Activated CD8-positive, alpha-beta T cell treated with anti-CD3 and anti-CD28 coated beads for 36 hours (primary cell): ENCODE measurements at regions of chr4 and their contacts with region 1.

Region 1: GRCh38 chr4:140359562-140360427 is 13.7 kb upstream of the SCOC start:
- DNase-seq: peak; percentile 88
- ATAC-seq: peak; percentile 93
- H3K4me3 Mint-ChIP-seq: no peak overlapping the region
- H3K27ac Mint-ChIP-seq: no peak overlapping the region
- H3K4me1 Mint-ChIP-seq: no peaks in the 10 kb centered on the region
- H3K27me3 Mint-ChIP-seq: peaks cover 2% of the 10 kb centered on the region
- CTCF ChIP-seq: peak; percentile 89

Region 2: DNA sequence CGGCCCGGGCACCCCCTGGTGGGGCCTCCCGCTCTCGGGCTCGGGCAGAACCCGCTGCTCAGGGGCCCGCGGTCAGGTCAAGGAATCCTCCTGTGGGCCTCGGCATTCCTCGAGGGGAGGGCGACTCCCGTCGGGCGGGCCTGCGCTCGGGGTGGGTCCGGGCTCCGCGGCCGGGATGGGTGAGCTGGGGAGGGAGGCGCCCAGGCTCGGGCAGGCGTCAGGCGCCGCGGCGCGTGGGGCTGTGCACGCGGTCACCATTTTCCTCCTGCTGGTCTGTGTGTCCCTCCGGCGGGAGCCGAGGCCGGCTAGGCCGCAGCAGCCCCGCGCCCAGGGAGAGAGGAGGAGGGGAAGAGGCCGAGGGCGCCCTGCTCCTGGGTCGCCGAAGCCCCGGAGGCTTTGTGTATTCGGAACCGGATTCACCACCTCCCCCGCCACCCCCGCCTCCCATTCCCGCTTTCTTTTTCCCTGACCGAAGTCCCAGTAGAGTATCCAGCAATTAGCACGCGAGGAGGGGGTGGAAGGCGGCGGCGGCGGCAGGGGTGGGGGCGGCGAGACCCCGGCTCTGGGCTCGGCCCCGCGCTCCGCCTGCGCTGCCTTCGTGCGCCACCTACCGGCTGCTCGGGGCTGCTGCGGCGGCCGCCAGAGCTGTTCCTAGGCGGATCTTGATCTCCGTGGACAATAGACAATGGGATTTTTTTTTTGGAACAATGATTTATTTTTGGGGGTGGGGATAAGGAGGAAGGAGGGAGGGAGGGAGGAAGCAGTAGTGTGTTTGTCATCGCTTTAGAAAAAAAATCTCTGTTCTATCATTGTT is 106.8 kb before region 1 on chr4:
- CTCF ChIA-PET with region 1: interaction called, 15 read pairs
- POLR2A ChIA-PET with region 1: no interaction called
- intact Hi-C with region 1: no loop called
- DNase-seq: peak; percentile 62
- ATAC-seq: peak; percentile 69
- H3K4me3 Mint-ChIP-seq: peak overlapping the region; percentile 29
- H3K27ac Mint-ChIP-seq: no peak overlapping the region
- H3K4me1 Mint-ChIP-seq: peaks cover 25% of the 10 kb centered on the region
- H3K27me3 Mint-ChIP-seq: peaks cover 11% of the 10 kb centered on the region
- CTCF ChIP-seq: peak; percentile 97

Region 3: DNA sequence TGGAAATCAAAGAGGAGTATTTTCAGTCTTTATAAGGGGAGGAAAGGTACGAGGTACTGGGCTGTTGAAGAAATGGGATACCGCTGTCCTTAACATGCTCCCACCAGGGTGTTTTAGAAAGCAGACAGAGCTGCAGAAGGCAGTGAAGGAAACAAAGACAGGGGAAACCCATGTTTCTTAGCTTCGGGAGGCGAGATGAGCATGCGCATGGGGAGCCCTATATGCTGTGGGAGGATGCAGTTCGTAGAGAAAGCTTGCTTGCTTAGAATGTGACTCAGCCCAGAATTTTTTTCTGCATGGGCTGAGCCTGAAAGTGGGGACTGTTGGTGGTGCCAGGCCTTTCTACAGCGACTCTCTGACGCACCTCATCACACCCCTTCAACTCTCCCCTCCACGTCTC is 15.2 kb before region 1 on chr4:
- CTCF ChIA-PET with region 1: interaction called, 35 read pairs
- POLR2A ChIA-PET with region 1: no interaction called
- intact Hi-C with region 1: no loop called
- DNase-seq: no peak
- ATAC-seq: no peak
- H3K4me3 Mint-ChIP-seq: no peak overlapping the region
- H3K27ac Mint-ChIP-seq: no peak overlapping the region
- H3K4me1 Mint-ChIP-seq: peaks cover 4% of the 10 kb centered on the region
- H3K27me3 Mint-ChIP-seq: peaks cover 14% of the 10 kb centered on the region
- CTCF ChIP-seq: no peak

Region 4: GRCh38 chr4:140382732-140383131 is 22.9 kb after region 1 on chr4:
- CTCF ChIA-PET with region 1: interaction called, 64 read pairs
- POLR2A ChIA-PET with region 1: no interaction called
- intact Hi-C with region 1: no loop called
- DNase-seq: no peak
- ATAC-seq: no peak
- H3K4me3 Mint-ChIP-seq: no peak overlapping the region
- H3K27ac Mint-ChIP-seq: no peak overlapping the region
- H3K4me1 Mint-ChIP-seq: peaks cover 2% of the 10 kb centered on the region
- H3K27me3 Mint-ChIP-seq: no peaks in the 10 kb centered on the region
- CTCF ChIP-seq: no peak

Region 5: GRCh38 chr4:140427106-140427961 is 67.5 kb after region 1 on chr4 and contains the start of gene CLGN:
- CTCF ChIA-PET with region 1: interaction called, 13 read pairs
- POLR2A ChIA-PET with region 1: interaction called, 3 read pairs
- intact Hi-C with region 1: no loop called
- DNase-seq: peak; percentile 68
- ATAC-seq: peak; percentile 91
- H3K4me3 Mint-ChIP-seq: peak within 1 kb of the TSS; percentile 73
- H3K27ac Mint-ChIP-seq: no peak within 1 kb of the TSS
- H3K4me1 Mint-ChIP-seq: peaks cover 5% of the 10 kb centered on the region
- H3K27me3 Mint-ChIP-seq: peaks cover 38% of the 10 kb centered on the region
- CTCF ChIP-seq: peak; percentile 54
- total RNA-seq, gene CLGN: 0.23 to 0.31 TPM

Region 6: DNA sequence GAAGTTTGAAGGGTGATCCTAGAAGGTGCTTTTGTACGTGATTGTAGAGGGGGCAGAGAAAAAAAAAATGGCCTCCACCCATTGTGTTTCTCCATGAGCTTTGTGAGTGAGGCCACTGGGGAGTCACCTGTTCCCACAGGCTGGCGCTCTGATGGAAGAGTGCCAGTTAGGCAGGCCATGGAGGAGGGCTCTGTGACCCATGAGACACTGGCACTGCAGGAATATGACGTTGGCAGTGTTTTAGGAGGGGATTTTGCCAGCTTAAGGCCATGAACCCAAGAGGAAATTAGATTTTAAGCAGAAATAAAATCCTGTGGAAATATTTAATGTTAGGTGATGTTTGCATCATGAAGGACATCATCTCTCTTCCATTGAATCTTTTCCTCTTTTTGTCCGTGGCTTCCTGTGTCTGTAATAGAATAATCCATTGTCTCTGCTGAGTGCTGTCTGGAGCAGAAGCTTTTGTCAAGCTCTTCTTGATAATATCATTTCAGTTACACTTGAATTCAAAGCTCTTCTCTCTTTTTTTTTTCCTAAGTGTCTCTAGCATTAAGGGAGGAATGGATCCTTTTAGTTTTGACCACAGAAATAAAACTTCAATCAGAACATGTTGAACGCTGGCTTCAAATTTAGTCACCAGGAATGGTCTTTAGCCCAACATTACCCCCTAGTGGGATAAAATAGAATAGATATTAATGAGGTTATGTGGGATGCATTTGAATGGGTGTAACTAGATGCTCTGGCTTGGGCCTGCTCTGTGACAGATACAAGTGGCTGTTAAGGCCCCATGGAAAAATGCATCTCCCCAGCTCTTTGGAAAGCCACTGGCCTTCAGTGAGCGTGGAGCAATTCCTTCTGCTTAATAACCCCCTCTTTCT is 250.0 kb after region 1 on chr4:
- CTCF ChIA-PET with region 1: interaction called, 29 read pairs
- POLR2A ChIA-PET with region 1: no interaction called
- intact Hi-C with region 1: loop called (anchors 5 kb)
- DNase-seq: no peak
- ATAC-seq: peak; percentile 73
- H3K4me3 Mint-ChIP-seq: no peak overlapping the region
- H3K27ac Mint-ChIP-seq: no peak overlapping the region
- H3K4me1 Mint-ChIP-seq: peaks cover 3% of the 10 kb centered on the region
- H3K27me3 Mint-ChIP-seq: peaks cover 6% of the 10 kb centered on the region
- CTCF ChIP-seq: peak; percentile 59

Region 7: GRCh38 chr4:140637836-140638235 is 278.0 kb after region 1 on chr4:
- CTCF ChIA-PET with region 1: interaction called, 16 read pairs
- POLR2A ChIA-PET with region 1: no interaction called
- intact Hi-C with region 1: no loop called
- DNase-seq: peak; percentile 60
- ATAC-seq: peak; percentile 76
- H3K4me3 Mint-ChIP-seq: no peak overlapping the region
- H3K27ac Mint-ChIP-seq: no peak overlapping the region
- H3K4me1 Mint-ChIP-seq: no peaks in the 10 kb centered on the region
- H3K27me3 Mint-ChIP-seq: peaks cover 6% of the 10 kb centered on the region
- CTCF ChIP-seq: peak; percentile 57